Esophagus muscularis mucosa (tissue), 4 donors: ENCODE measurements at regions of chr17 and their contacts with region 1.

Region 1: GRCh38 chr17:12256380-12256995 is 235.8 kb downstream of the MAP2K4 start:
- DNase-seq: no peak
- H3K4me3 ChIP-seq: no peak overlapping the region
- H3K27ac ChIP-seq: peak overlapping the region in 3 of 4 donors; percentile 4 to 53 (median 49)
- H3K4me1 ChIP-seq: peaks cover 0 to 44% (median 39%) of the 10 kb centered on the region in 4 donors
- H3K27me3 ChIP-seq: no peaks in the 10 kb centered on the region
- CTCF ChIP-seq: peak; percentile 76 to 85 (median 82)
- EP300 ChIP-seq: no peak
- POLR2A ChIP-seq: no peak

Region 2: GRCh38 chr17:11768106-11768505 is 488.4 kb before region 1 on chr17:
- intact Hi-C with region 1: no loop called
- DNase-seq: peak; percentile 78
- H3K4me3 ChIP-seq: no peak overlapping the region
- H3K27ac ChIP-seq: no peak overlapping the region
- H3K4me1 ChIP-seq: no peaks in the 10 kb centered on the region
- H3K27me3 ChIP-seq: no peaks in the 10 kb centered on the region
- CTCF ChIP-seq: no peak
- EP300 ChIP-seq: no peak
- POLR2A ChIP-seq: no peak

Region 3: GRCh38 chr17:12078791-12079190 is 177.7 kb before region 1 on chr17:
- intact Hi-C with region 1: no loop called
- DNase-seq: no peak
- H3K4me3 ChIP-seq: no peak overlapping the region
- H3K27ac ChIP-seq: no peak overlapping the region
- H3K4me1 ChIP-seq: peaks cover 5 to 14% (median 10%) of the 10 kb centered on the region in 4 donors
- H3K27me3 ChIP-seq: no peaks in the 10 kb centered on the region
- CTCF ChIP-seq: no peak
- EP300 ChIP-seq: no peak
- POLR2A ChIP-seq: no peak

Region 4: GRCh38 chr17:12180644-12181261 is 75.7 kb before region 1 on chr17:
- intact Hi-C with region 1: loop called (anchors 5 kb)
- DNase-seq: no peak
- H3K4me3 ChIP-seq: peak overlapping the region in 1 of 4 donors; percentile 11
- H3K27ac ChIP-seq: peak overlapping the region; percentile 54 to 76 (median 67)
- H3K4me1 ChIP-seq: peaks cover 0 to 21% (median 7%) of the 10 kb centered on the region in 4 donors
- H3K27me3 ChIP-seq: no peaks in the 10 kb centered on the region
- CTCF ChIP-seq: peak; percentile 74 to 75 (median 74)
- EP300 ChIP-seq: no peak
- POLR2A ChIP-seq: no peak

Region 5: GRCh38 chr17:12415031-12415430 is 158.5 kb after region 1 on chr17:
- intact Hi-C with region 1: loop called (anchors 10 kb)
- DNase-seq: no peak
- H3K4me3 ChIP-seq: no peak overlapping the region
- H3K27ac ChIP-seq: peak overlapping the region; percentile 66 to 81 (median 79)
- H3K4me1 ChIP-seq: peaks cover 0 to 54% (median 31%) of the 10 kb centered on the region in 4 donors
- H3K27me3 ChIP-seq: no peaks in the 10 kb centered on the region
- CTCF ChIP-seq: no peak
- EP300 ChIP-seq: no peak
- POLR2A ChIP-seq: no peak

Region 6: DNA sequence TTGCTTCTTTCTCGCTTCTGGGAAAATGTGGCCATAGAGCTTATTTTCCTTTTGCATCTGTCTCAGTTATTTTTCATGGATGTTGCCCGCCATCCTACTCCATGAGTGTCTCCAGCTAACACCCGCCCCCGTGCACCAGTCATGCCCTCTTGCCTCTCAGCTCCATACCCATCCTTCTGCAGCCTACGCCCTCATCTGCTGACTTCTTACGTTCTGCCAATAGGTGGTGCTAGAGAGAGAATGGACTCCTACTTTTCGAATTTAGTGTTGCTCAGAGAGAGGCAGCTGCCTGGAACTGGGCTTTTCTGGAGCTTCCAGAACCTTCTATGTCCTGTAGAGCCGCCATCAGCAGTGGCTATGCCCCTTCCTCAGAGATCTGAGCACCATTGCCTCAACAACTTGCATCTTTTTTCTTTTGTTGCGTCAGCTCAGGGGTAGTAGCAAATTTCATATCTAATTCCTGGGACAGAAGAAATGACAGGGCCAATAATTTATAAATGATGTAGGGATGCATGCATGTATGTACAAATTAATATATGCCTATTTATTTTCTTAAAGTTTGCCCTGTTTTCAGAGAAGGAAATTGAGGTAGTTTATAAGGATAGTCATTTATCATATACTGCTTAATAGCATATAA is 289.5 kb after region 1 on chr17:
- intact Hi-C with region 1: loop called (anchors 10 kb)
- DNase-seq: no peak
- H3K4me3 ChIP-seq: no peak overlapping the region
- H3K27ac ChIP-seq: no peak overlapping the region
- H3K4me1 ChIP-seq: peaks cover 0 to 12% (median 5%) of the 10 kb centered on the region in 4 donors
- H3K27me3 ChIP-seq: no peaks in the 10 kb centered on the region
- CTCF ChIP-seq: peak; percentile 67 to 81 (median 69)
- EP300 ChIP-seq: no peak
- POLR2A ChIP-seq: no peak

Region 7: DNA sequence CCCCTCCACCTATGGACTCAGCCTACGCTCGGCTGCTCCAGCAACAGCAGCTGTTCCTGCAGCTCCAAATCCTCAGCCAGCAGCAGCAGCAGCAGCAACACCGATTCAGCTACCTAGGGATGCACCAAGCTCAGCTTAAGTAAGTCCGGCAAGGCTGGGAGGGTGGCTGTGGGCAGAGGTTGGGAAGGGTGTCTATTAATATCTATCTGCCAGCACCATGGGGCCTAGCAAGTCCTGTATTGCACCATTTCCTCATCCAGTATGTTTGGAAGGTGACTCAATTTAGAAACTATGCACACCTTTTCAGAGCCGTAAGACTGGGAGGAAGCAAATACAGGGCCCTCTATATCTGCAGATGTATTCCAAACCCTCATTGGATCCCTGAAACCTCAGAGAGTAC is 487.8 kb after region 1 on chr17:
- intact Hi-C with region 1: loop called (anchors 5 kb)
- DNase-seq: no peak
- H3K4me3 ChIP-seq: no peak overlapping the region
- H3K27ac ChIP-seq: peak overlapping the region; percentile 10 to 48 (median 39)
- H3K4me1 ChIP-seq: peaks cover 14 to 35% (median 25%) of the 10 kb centered on the region in 4 donors
- H3K27me3 ChIP-seq: no peaks in the 10 kb centered on the region
- CTCF ChIP-seq: no peak
- EP300 ChIP-seq: no peak
- POLR2A ChIP-seq: no peak

Region 8: DNA sequence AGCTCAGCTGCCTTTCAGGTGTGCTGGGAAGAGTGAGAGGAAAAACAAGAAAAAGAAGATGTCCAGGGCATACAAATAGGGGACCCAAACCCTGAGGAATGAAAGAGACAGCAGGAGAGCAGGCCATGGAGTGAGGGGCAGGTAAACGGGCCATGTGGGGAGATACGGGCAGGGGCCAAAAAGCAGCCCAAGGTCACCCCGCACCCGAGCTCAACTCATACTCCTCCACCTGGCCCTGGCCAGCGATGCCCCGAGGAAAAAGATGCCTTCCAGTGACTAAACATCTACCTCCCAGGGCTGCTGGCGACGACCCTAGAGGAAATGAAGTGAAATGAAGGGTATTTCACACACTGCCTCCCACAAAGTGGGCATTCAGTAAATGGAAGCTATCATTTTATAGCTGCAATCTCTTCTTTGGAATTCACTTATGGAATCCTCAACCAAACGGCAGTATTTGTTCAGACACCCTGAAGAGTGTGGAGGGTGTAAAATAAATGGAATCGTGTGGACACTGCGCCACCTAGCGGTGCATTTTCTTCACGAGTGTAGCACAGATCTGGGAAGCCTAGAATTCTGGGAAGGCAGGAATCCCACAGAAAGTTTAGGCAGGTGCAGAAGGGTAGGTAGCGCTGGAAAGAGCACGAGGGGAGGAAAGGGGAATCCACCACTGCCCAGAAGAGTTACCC is 746.4 kb after region 1 on chr17:
- intact Hi-C with region 1: loop called (anchors 10 kb)
- DNase-seq: peak; percentile 94
- H3K4me3 ChIP-seq: no peak overlapping the region
- H3K27ac ChIP-seq: no peak overlapping the region
- H3K4me1 ChIP-seq: peaks cover 3 to 20% (median 13%) of the 10 kb centered on the region in 4 donors
- H3K27me3 ChIP-seq: no peaks in the 10 kb centered on the region
- CTCF ChIP-seq: peak; percentile 79 to 80 (median 80)
- EP300 ChIP-seq: no peak
- POLR2A ChIP-seq: no peak